Aorta (tissue), 5 donors: ENCODE measurements at regions of chr6 and their contacts with region 1.

Region 1: GRCh38 chr6:81265092-81265491 is 487.4 kb downstream of the TENT5A start:
- DNase-seq: peak; percentile 72 to 80
- ATAC-seq: peak; percentile 73
- H3K4me3 ChIP-seq: peak overlapping the region in 1 of 2 donors; percentile 82
- H3K27ac ChIP-seq: peak overlapping the region in 1 of 2 donors; percentile 84
- H3K4me1 ChIP-seq: no peaks in the 10 kb centered on the region
- H3K27me3 ChIP-seq: no peaks in the 10 kb centered on the region

Region 2: GRCh38 chr6:82035526-82035925 is 770.4 kb after region 1 on chr6:
- intact Hi-C with region 1: loop called in 1 of 2 experiments (anchors 5 kb)
- DNase-seq: no peak
- ATAC-seq: no peak
- H3K4me3 ChIP-seq: no peak overlapping the region
- H3K27ac ChIP-seq: no peak overlapping the region
- H3K4me1 ChIP-seq: peaks cover 3% of the 10 kb centered on the region in 2 donors
- H3K27me3 ChIP-seq: no peaks in the 10 kb centered on the region